ENCODE measurements at regions of chrX and their contacts with region 1.

Region 1: GRCh38 chrX:20066968-20067708 is 49.6 kb downstream of the MAP7D2 start:
- DNase-seq: peak; percentile 23
- ATAC-seq: peak; percentile 78
- H3K4me3 Mint-ChIP-seq: no peak overlapping the region
- H3K27ac Mint-ChIP-seq: no peak overlapping the region
- H3K4me1 Mint-ChIP-seq: no peaks in the 10 kb centered on the region
- H3K27me3 Mint-ChIP-seq: no peaks in the 10 kb centered on the region
- CTCF ChIP-seq: peak; percentile 51

Region 2: GRCh38 chrX:19544693-19545305 is 522.3 kb before region 1 on chrX:
- CTCF ChIA-PET with region 1: no interaction called
- POLR2A ChIA-PET with region 1: no interaction called
- intact Hi-C with region 1: loop called (anchors 10 kb)
- DNase-seq: peak; percentile 62
- ATAC-seq: peak; percentile 66
- H3K4me3 Mint-ChIP-seq: no peak overlapping the region
- H3K27ac Mint-ChIP-seq: peak overlapping the region; percentile 36
- H3K4me1 Mint-ChIP-seq: peaks cover 31% of the 10 kb centered on the region
- H3K27me3 Mint-ChIP-seq: no peaks in the 10 kb centered on the region
- CTCF ChIP-seq: peak; percentile 60

Region 3: DNA sequence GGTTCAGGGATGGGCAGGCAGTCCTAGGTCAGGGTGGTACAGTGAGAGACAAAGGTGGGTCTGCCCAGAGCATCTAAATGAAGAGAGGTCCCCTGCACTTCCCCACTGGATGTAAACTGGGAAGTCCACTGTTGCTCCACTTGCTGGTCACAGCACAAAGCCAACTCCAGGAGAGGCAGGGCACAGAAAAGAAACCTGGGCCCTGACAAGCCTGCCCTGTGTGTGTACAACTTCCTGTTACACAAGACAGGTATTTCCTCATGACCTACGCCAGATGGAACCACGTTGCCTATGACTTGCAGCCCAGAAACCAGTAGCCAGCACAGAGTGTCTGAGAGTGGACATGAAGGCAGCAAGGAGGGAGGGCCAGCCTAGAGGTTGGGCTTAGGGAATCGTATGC is 341.5 kb before region 1 on chrX:
- CTCF ChIA-PET with region 1: no interaction called
- POLR2A ChIA-PET with region 1: no interaction called
- intact Hi-C with region 1: no loop called
- DNase-seq: peak; percentile 28
- ATAC-seq: peak; percentile 73
- H3K4me3 Mint-ChIP-seq: no peak overlapping the region
- H3K27ac Mint-ChIP-seq: peak overlapping the region; percentile 87
- H3K4me1 Mint-ChIP-seq: peaks cover 58% of the 10 kb centered on the region
- H3K27me3 Mint-ChIP-seq: no peaks in the 10 kb centered on the region
- CTCF ChIP-seq: no peak